HepG2 (cell line): ENCODE measurements at regions of chr1 and their contacts with region 1.

Region 1: DNA sequence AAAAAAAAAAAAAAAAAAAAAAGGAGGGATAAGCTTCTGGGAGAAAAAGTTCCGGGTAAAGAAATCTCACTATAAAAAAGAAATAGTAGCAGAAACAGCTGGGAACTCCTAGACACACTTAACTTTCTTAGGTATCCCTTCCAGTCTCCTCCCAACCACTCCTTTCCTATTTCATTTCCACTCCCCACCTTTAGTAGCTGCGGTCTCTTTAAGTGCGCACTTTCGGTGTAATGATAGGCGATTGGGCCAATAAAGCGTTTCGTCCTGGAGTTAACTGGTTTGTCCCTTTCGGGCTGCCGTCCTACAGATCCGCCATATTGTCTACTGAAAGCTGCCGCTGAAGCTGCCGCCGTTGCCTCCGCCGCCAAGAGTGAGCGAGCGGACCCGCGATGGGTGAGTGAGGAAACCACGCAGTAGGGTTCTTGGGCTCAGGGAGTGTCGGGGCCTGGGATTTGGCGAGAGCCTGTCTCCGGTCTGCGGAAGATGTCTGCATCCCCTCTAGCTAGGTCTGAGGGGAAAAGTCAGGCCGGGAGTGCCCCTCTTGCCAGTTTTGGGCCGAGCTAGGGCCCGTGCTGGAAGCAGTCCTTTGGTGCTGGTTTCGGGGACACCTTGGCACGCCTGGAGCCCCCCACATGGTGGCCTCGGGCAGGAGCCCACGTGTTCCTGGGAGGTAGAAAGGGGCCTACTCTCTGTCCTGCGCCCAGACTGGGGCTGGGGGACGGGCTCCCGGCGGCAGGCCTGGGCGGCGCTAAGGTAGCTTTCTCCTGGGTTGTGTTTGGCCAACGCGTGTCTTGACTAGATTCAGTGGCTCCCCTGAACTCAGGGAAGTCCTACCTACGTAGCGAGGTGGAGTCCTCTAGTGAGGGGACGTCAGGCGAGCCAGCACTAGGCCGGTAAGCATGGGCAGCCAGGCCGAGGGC is at the start of gene KPNA6:
- DNase-seq: peak; percentile 92
- ATAC-seq: peak; percentile 83
- H3K4me3 ChIP-seq: peak within 1 kb of the TSS; percentile 82 to 98 (median 92)
- H3K27ac ChIP-seq: peak within 1 kb of the TSS; percentile 93
- H3K4me1 ChIP-seq: peaks cover 53% of the 10 kb centered on the region
- H3K27me3 ChIP-seq: no peaks in the 10 kb centered on the region; a peak in 1 of 5 replicates
- CTCF ChIP-seq: no peak
- EP300 ChIP-seq: peak in 1 of 2 experiments; percentile 24; a peak in 1 of 4 replicates
- POLR2A ChIP-seq: peak; percentile 66 to 67
- RAD21 ChIP-seq: no peak
- total RNA-seq, gene KPNA6: 47.5 and 111 TPM in 2 replicates

Region 2: GRCh38 chr1:32072622-32073298 is 35.2 kb before region 1 on chr1 and contains the start of gene TMEM39B:
- CTCF ChIA-PET with region 1: no interaction called
- POLR2A ChIA-PET with region 1: interaction called, 37 read pairs
- in situ Hi-C with region 1: no loop called
- intact Hi-C with region 1: loop called (anchors 5 kb)
- DNase-seq: peak; percentile 85
- ATAC-seq: peak; percentile 86
- H3K4me3 ChIP-seq: peak within 1 kb of the TSS; percentile 81 to 91 (median 81)
- H3K27ac ChIP-seq: peak within 1 kb of the TSS; percentile 61
- H3K4me1 ChIP-seq: peaks cover 46% of the 10 kb centered on the region
- H3K27me3 ChIP-seq: no peaks in the 10 kb centered on the region; a peak in 1 of 5 replicates
- CTCF ChIP-seq: no peak; the same call in 1 of the 2 replicates
- EP300 ChIP-seq: no peak
- POLR2A ChIP-seq: peak; percentile 63 to 67
- RAD21 ChIP-seq: 0 out of 2 replicates have a peak, but pooled peaks have one; percentile 30
- total RNA-seq, gene TMEM39B: 3.1 and 4.9 TPM in 2 replicates

Region 3: DNA sequence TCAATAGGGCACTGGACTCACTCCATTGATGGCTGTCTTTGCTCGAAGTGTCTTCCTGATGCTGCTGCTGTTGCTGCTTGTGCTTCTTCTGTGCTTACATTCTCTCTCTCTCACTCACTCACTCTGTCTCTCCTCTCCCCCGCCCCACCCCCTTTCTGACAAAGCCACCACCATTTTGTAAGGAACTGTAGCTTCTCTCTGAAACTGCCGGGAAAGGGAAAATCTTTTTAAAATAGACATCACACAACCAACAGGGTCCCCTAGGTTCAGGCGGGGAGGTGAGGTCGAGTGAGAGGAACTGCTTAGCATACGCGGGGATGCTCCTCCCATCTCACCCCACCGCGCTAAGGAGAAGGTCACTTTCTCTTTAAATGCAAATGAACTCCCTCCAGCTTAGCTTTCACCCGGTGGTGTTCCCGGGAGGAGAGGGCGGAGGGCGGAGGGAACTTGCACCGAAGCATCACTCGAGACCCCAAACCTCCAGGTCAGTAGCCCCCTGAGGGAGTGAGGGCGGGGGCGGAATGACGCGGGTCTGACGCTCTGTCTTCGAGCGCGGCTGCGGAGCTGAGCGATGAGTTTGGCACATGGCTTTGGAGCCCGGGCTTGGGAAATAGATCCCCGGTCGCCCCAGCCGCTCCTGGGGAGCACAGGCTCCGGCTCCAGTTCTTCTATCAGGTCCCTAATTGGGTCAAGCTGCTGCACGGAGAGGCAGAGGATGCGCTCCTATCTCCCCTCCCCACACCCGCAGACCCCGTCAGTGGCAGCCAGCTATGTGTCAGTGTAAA is 92.4 kb after region 1 on chr1 and contains the start of gene CCDC28B:
- CTCF ChIA-PET with region 1: no interaction called
- POLR2A ChIA-PET with region 1: interaction called, 10 read pairs
- in situ Hi-C with region 1: no loop called
- intact Hi-C with region 1: no loop called
- DNase-seq: no peak
- ATAC-seq: peak; percentile 42
- H3K4me3 ChIP-seq: peak within 1 kb of the TSS; percentile 64 to 72 (median 65)
- H3K27ac ChIP-seq: no peak within 1 kb of the TSS
- H3K4me1 ChIP-seq: peaks cover 20% of the 10 kb centered on the region
- H3K27me3 ChIP-seq: no peaks in the 10 kb centered on the region
- CTCF ChIP-seq: no peak
- EP300 ChIP-seq: no peak
- POLR2A ChIP-seq: no peak
- RAD21 ChIP-seq: no peak
- total RNA-seq, gene CCDC28B: 2.8 and 3.5 TPM in 2 replicates